Activated CD4-positive, alpha-beta T cell treated with anti-CD3 and anti-CD28 coated beads, Interleukin-2, amount 10 ng/mL, durations not matched to agents 7 days and 5 days (primary cell): ENCODE measurements at regions of chr1 and their contacts with region 1.

Region 1: GRCh38 chr1:23651069-23651808 is 40.4 kb upstream of the RPL11 start:
- DNase-seq: no peak
- H3K4me3 Mint-ChIP-seq: no peak overlapping the region
- H3K27ac Mint-ChIP-seq: no peak overlapping the region
- H3K4me1 Mint-ChIP-seq: no peaks in the 10 kb centered on the region
- H3K27me3 Mint-ChIP-seq: no peaks in the 10 kb centered on the region

Region 2: DNA sequence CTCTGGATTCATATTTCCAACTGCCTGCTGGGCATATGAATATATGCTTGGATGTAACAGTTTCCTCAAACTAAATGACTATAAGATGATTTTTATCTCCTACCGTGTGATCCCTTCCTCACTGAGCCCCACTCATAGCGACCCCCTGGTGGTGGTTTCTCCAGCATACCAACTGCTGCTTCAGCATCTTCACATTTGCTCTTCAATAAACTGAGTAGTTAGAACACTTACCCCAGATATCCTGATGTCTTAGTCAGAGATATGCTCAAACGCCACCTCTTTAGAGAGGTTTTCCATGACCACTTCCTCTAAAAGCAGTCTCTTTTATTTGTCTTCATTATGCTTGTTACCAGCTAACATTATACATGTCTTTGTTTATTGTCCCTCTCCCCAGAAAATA is 297.0 kb before region 1 on chr1:
- CTCF ChIA-PET with region 1: no interaction called
- POLR2A ChIA-PET with region 1: interaction called, 12 read pairs
- DNase-seq: no peak
- H3K4me3 Mint-ChIP-seq: no peak overlapping the region
- H3K27ac Mint-ChIP-seq: no peak overlapping the region
- H3K4me1 Mint-ChIP-seq: peaks cover 4% of the 10 kb centered on the region
- H3K27me3 Mint-ChIP-seq: peaks cover 2% of the 10 kb centered on the region

Region 3: GRCh38 chr1:23613191-23614031 is 37.8 kb before region 1 on chr1:
- CTCF ChIA-PET with region 1: no interaction called
- POLR2A ChIA-PET with region 1: no interaction called
- DNase-seq: peak; percentile 73
- H3K4me3 Mint-ChIP-seq: peak overlapping the region; percentile 29
- H3K27ac Mint-ChIP-seq: peak overlapping the region; percentile 96
- H3K4me1 Mint-ChIP-seq: peaks cover 76% of the 10 kb centered on the region
- H3K27me3 Mint-ChIP-seq: no peaks in the 10 kb centered on the region

Region 4: DNA sequence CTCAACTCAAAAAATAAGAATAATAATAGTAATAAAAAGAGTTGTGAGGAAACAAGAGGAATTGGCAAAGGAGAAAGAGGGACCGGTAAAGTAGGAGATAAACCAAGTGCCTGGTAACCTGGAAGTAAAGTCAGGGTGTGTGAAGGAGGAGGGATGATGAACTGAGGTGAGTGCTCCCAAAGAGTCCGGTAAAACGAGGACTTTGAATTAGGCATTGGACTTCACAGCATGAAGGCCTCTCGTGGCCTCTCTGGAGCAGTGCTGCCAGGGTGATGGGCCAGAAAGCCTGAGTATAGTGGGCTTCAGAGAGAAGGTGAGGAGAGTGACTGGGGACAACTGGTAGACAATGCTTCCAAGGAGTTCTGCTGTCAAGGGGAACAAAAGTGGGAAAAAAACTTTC is 58.0 kb after region 1 on chr1:
- CTCF ChIA-PET with region 1: no interaction called
- POLR2A ChIA-PET with region 1: no interaction called
- DNase-seq: no peak
- H3K4me3 Mint-ChIP-seq: no peak overlapping the region
- H3K27ac Mint-ChIP-seq: no peak overlapping the region
- H3K4me1 Mint-ChIP-seq: no peaks in the 10 kb centered on the region
- H3K27me3 Mint-ChIP-seq: no peaks in the 10 kb centered on the region